ENCODE measurements at regions of chr6 and their contacts with region 1.

Region 1: GRCh38 chr6:35139908-35140655 is 1.1 kb downstream of the TCP11 start:
- DNase-seq: peak; percentile 70
- H3K4me3 Mint-ChIP-seq: no peak overlapping the region
- H3K27ac Mint-ChIP-seq: no peak overlapping the region
- H3K4me1 Mint-ChIP-seq: peaks cover 4% of the 10 kb centered on the region
- H3K27me3 Mint-ChIP-seq: no peaks in the 10 kb centered on the region
- CTCF ChIP-seq: peak; percentile 91

Region 2: GRCh38 chr6:34161857-34162515 is 978.1 kb before region 1 on chr6:
- CTCF ChIA-PET with region 1: interaction called, 3 read pairs
- POLR2A ChIA-PET with region 1: no interaction called
- intact Hi-C with region 1: loop called (anchors 5 kb)
- DNase-seq: no peak
- H3K4me3 Mint-ChIP-seq: no peak overlapping the region
- H3K27ac Mint-ChIP-seq: no peak overlapping the region
- H3K4me1 Mint-ChIP-seq: no peaks in the 10 kb centered on the region
- H3K27me3 Mint-ChIP-seq: peaks cover 38% of the 10 kb centered on the region
- CTCF ChIP-seq: no peak

Region 3: DNA sequence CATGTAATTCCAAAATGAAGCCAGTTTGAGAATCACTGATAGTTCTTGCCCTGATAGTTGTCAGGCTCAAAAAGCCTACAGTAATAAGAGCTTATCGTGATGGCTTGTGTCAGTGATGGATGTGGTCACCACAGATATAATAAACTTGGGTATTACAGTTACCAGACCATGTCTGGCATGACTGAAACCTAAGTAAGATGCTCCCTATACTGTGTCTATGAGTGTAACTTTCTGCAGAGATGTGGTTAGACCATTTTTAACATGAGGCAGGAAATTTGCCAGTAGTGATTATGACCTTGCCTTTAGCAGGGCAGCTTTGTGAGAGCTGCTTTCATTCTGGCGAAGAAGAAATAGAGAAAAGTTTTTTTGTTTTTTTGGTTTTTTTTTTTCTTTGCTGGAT is 160.9 kb before region 1 on chr6:
- CTCF ChIA-PET with region 1: interaction called, 44 read pairs
- POLR2A ChIA-PET with region 1: interaction called, 3 read pairs
- intact Hi-C with region 1: no loop called
- DNase-seq: no peak
- H3K4me3 Mint-ChIP-seq: no peak overlapping the region
- H3K27ac Mint-ChIP-seq: no peak overlapping the region
- H3K4me1 Mint-ChIP-seq: no peaks in the 10 kb centered on the region
- H3K27me3 Mint-ChIP-seq: no peaks in the 10 kb centered on the region
- CTCF ChIP-seq: no peak

Region 4: DNA sequence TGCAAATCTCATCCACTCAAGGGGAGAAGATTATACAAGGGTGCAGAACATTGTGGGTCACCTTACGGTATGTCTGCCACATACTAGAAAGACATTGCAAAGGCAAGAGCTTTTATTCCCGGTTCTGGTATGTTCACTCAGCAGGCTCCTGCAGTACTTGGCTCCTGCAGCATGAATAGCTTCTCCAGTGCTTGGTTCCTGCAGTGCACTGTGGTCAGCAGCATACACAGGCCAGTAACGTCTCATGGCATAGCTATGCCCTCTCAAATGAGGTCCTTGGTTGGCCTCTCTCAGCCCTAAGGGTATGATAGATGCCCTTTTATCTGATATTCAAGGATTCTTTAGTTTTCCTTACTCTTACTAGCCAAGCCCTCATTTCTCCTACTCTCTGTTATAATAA is 11.6 kb before region 1 on chr6:
- CTCF ChIA-PET with region 1: interaction called, 35 read pairs
- POLR2A ChIA-PET with region 1: no interaction called
- intact Hi-C with region 1: no loop called
- DNase-seq: no peak
- H3K4me3 Mint-ChIP-seq: no peak overlapping the region
- H3K27ac Mint-ChIP-seq: no peak overlapping the region
- H3K4me1 Mint-ChIP-seq: no peaks in the 10 kb centered on the region
- H3K27me3 Mint-ChIP-seq: peaks cover 12% of the 10 kb centered on the region
- CTCF ChIP-seq: no peak

Region 5: GRCh38 chr6:35202066-35202546 is 62.0 kb after region 1 on chr6:
- CTCF ChIA-PET with region 1: interaction called, 171 read pairs
- POLR2A ChIA-PET with region 1: no interaction called
- intact Hi-C with region 1: no loop called
- DNase-seq: no peak
- H3K4me3 Mint-ChIP-seq: no peak overlapping the region
- H3K27ac Mint-ChIP-seq: no peak overlapping the region
- H3K4me1 Mint-ChIP-seq: peaks cover 4% of the 10 kb centered on the region
- H3K27me3 Mint-ChIP-seq: peaks cover 29% of the 10 kb centered on the region
- CTCF ChIP-seq: no peak